ENCODE measurements at regions of chr17 and their contacts with region 1.

Region 1: GRCh38 chr17:39754161-39754951 is 16.6 kb downstream of the GRB7 start:
- DNase-seq: peak; percentile 100
- H3K4me3 Mint-ChIP-seq: peak overlapping the region; percentile 63
- H3K27ac Mint-ChIP-seq: peak overlapping the region; percentile 12
- H3K4me1 Mint-ChIP-seq: peaks cover 58% of the 10 kb centered on the region
- H3K27me3 Mint-ChIP-seq: peaks cover 35% of the 10 kb centered on the region
- CTCF ChIP-seq: no peak

Region 2: DNA sequence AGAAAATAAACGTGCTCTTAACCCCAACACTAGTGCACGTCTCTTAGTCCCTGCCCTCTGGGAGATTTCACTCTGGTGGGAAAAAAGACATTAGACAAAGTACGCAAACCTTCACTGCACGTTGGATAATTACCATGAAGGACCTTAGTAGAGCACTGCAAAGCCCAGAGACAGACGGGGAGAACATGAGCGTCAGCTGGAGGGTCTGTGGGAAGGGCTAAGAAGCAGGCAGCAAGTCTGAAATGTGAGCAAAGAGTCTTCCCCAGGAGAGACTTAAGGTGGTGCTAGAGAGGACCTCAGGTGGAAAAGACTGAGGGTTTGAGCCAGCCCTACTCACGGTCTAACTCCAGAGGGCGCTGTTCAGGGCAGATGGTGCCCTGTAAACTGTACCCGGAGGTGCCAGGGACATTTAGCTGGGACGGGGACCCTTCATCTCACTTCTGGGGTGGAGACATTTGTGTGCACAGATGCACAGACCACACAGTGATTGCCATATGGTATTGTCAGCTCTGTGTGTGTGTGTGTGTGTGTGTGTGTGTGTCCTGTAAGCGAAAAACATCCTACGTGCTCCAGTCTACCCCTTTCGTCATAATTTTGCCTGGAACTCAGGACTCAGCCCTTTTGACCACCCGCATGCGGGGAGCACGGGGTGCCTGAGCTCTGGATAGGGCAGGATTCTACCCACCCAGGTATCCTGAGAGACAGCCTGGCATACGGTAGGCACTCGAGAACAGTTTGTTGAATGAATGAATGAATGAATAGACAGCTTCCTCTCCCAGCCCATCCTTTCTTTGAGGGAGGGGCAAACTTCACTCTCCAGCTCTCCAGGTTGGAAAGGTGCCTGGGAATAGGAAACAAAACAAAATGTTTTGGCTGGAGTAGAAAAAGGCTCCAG is 518.6 kb before region 1 on chr17:
- CTCF ChIA-PET with region 1: no interaction called
- intact Hi-C with region 1: no loop called
- DNase-seq: peak; percentile 88
- H3K4me3 Mint-ChIP-seq: no peak overlapping the region
- H3K27ac Mint-ChIP-seq: no peak overlapping the region
- H3K4me1 Mint-ChIP-seq: peaks cover 49% of the 10 kb centered on the region
- H3K27me3 Mint-ChIP-seq: peaks cover 28% of the 10 kb centered on the region
- CTCF ChIP-seq: peak; percentile 100

Region 3: DNA sequence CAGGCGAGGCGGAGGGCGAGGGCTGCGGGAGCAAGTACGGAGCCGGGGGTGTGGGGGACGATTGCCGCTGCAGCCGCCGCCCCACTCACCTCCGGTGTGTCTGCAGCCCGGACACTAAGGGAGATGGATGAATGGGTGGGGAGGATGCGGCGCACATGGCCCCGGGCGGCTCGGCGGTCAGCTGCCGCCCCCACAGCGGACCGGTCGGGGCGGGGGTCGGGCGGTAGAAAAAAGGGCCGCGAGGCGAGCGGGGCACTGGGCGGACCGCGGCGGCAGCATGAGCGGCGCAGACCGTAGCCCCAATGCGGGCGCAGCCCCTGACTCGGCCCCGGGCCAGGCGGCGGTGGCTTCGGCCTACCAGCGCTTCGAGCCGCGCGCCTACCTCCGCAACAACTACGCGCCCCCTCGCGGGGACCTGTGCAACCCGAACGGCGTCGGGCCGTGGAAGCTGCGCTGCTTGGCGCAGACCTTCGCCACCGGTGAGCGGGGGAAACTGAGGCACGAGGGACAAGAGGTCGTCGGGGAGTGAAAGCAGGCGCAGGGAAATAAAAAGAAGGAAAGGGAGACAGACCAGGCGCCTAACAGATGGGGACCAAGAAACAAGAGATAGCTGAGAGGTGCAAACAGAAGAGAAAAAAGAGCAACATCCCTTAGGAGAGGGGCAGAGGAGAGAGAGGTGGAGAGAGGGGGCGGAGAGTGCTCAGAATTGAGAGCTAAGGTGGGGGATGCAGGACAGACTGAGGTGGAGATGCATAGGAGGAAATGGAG is 86.0 kb before region 1 on chr17 and contains the start of gene PNMT:
- CTCF ChIA-PET with region 1: interaction called, 34,714 read pairs
- intact Hi-C with region 1: loop called (anchors 1 kb)
- DNase-seq: peak; percentile 100
- H3K4me3 Mint-ChIP-seq: peak within 1 kb of the TSS; percentile 24
- H3K27ac Mint-ChIP-seq: peak within 1 kb of the TSS; percentile 0
- H3K4me1 Mint-ChIP-seq: peaks cover 65% of the 10 kb centered on the region
- H3K27me3 Mint-ChIP-seq: peaks cover 69% of the 10 kb centered on the region
- CTCF ChIP-seq: no peak
- total RNA-seq, gene PNMT: 1.3 and 3.2 TPM in 2 replicates

Region 4: GRCh38 chr17:39738931-39739884 is 15.1 kb before region 1 on chr17:
- CTCF ChIA-PET with region 1: interaction called, 34,714 read pairs
- intact Hi-C with region 1: loop called (anchors 1 kb)
- DNase-seq: peak; percentile 100
- H3K4me3 Mint-ChIP-seq: peak overlapping the region; percentile 77
- H3K27ac Mint-ChIP-seq: peak overlapping the region; percentile 21
- H3K4me1 Mint-ChIP-seq: peaks cover 54% of the 10 kb centered on the region
- H3K27me3 Mint-ChIP-seq: no peaks in the 10 kb centered on the region
- CTCF ChIP-seq: no peak

Region 5: DNA sequence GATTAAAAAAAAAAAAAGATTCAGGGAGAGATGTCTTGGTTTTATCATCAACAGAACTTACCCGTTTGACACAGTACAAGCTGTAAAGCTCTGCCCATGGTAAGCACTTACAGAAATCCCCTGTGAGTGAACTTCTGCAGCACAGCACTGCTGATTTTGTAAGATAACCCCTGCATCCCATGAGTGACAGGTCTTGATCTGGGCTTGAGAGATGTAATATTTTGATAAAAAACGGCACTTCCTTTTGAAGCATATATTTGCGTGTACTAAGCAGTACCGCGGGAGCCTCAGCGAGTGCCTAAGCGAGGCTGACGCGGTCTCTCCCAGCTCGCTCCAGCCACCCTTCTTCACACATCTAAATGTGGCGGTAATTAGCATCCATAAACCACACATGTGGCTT is 59.3 kb after region 1 on chr17:
- CTCF ChIA-PET with region 1: interaction called, 1,211 read pairs
- intact Hi-C with region 1: loop called (anchors 1 kb)
- DNase-seq: peak; percentile 64
- H3K4me3 Mint-ChIP-seq: no peak overlapping the region
- H3K27ac Mint-ChIP-seq: no peak overlapping the region
- H3K4me1 Mint-ChIP-seq: peaks cover 19% of the 10 kb centered on the region
- H3K27me3 Mint-ChIP-seq: no peaks in the 10 kb centered on the region
- CTCF ChIP-seq: no peak

Region 6: GRCh38 chr17:39852239-39852638 is 97.9 kb after region 1 on chr17:
- CTCF ChIA-PET with region 1: interaction called, 174 read pairs
- intact Hi-C with region 1: no loop called
- DNase-seq: peak; percentile 59
- H3K4me3 Mint-ChIP-seq: no peak overlapping the region
- H3K27ac Mint-ChIP-seq: no peak overlapping the region
- H3K4me1 Mint-ChIP-seq: peaks cover 10% of the 10 kb centered on the region
- H3K27me3 Mint-ChIP-seq: no peaks in the 10 kb centered on the region
- CTCF ChIP-seq: no peak

Region 7: GRCh38 chr17:39916918-39917317 is 162.6 kb after region 1 on chr17:
- CTCF ChIA-PET with region 1: interaction called, 188 read pairs
- intact Hi-C with region 1: no loop called
- DNase-seq: peak; percentile 94
- H3K4me3 Mint-ChIP-seq: no peak overlapping the region
- H3K27ac Mint-ChIP-seq: no peak overlapping the region
- H3K4me1 Mint-ChIP-seq: peaks cover 24% of the 10 kb centered on the region
- H3K27me3 Mint-ChIP-seq: no peaks in the 10 kb centered on the region
- CTCF ChIP-seq: no peak

Region 8: DNA sequence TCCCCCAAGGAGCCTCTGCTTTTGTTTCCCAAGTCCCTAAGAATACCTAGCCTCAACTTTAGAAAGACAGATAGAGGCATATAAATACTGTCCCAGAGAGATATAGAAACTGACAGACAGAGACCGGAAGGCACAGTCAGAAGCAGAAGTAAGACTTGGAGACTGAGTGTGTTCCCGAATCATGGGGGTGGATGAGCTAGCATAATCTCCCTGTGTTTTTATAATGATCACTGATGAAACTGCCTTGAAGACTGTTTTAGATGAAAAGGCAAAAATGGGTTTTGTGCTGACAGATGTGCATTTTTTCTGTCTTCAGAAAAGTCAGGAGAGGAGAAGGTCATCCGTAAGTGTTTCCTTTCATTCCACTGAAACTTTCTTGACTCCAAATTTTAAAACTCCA is 217.9 kb after region 1 on chr17:
- CTCF ChIA-PET with region 1: interaction called, 1,070 read pairs
- intact Hi-C with region 1: no loop called
- DNase-seq: no peak
- H3K4me3 Mint-ChIP-seq: no peak overlapping the region
- H3K27ac Mint-ChIP-seq: no peak overlapping the region
- H3K4me1 Mint-ChIP-seq: peaks cover 17% of the 10 kb centered on the region
- H3K27me3 Mint-ChIP-seq: peaks cover 84% of the 10 kb centered on the region
- CTCF ChIP-seq: no peak

Measured in Calu3 (cell line).